Dorsolateral prefrontal cortex (tissue), 120 donors: ENCODE measurements at regions of chr9 and their contacts with region 1.

Region 1: GRCh38 chr9:133782157-133783130 is 44.3 kb upstream of the SARDH start:
- DNase-seq: peak; percentile 68 to 87 (median 82)
- H3K4me3 ChIP-seq: no peak overlapping the region
- H3K27ac ChIP-seq: no peak overlapping the region
- H3K27me3 ChIP-seq: no peaks in the 10 kb centered on the region
- CTCF ChIP-seq: peak; percentile 51 to 91 (median 83)

Region 2: DNA sequence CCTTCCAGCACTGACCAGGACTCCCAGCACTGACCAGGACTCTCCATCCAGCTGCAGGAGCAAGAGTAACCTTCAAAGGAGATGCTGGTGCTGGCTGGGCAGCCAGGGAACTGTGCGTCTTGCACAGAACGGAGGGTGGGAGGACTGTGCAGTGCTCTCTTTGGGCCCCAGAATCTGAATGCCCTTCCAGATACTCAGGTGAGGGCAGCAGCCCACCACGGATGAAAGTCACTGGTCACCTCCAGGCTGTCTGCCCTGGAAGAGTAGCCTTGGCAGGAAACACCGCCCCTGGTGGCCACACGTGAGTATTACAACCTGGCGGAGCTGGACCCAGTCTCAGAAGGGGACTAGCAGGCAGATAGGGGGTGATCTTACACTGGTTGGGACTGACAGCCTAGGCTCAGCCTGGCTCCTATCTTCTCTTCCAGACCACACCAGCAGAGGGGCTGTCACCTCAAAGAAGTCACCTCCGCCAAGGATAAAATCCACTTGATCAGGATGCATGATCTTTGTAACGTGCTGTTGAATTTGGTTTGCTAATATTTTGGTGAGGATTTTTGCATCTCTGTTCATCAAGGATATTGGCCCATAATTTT is 39.5 kb before region 1 on chr9:
- intact Hi-C with region 1: no loop called
- DNase-seq: peak; percentile 58 to 88 (median 78)
- H3K4me3 ChIP-seq: no peak overlapping the region
- H3K27ac ChIP-seq: no peak overlapping the region
- H3K27me3 ChIP-seq: peaks cover 0 to 6% (median 0%) of the 10 kb centered on the region in 45 donors
- CTCF ChIP-seq: peak; percentile 68 to 99 (median 95)

Region 3: GRCh38 chr9:134455934-134456739 is 673.7 kb after region 1 on chr9:
- intact Hi-C with region 1: loop called in 1 of 2 experiments (anchors 10 kb)
- DNase-seq: peak in 3 of 10 donors; percentile 63 to 81 (median 71)
- H3K4me3 ChIP-seq: peak overlapping the region in 53 of 59 donors; percentile 1 to 50 (median 29)
- H3K27ac ChIP-seq: peak overlapping the region in 47 of 59 donors; percentile 11 to 87 (median 67)
- H3K27me3 ChIP-seq: no peaks in the 10 kb centered on the region
- CTCF ChIP-seq: no peak